ENCODE measurements at regions of chr5 and their contacts with region 1.

Region 1: GRCh38 chr5:66306105-66306843 is 162.2 kb downstream of the SREK1 start:
- DNase-seq: peak; percentile 58
- ATAC-seq: peak; percentile 75
- H3K4me3 ChIP-seq: no peak overlapping the region
- H3K4me3 Mint-ChIP-seq: no peak overlapping the region
- H3K27ac ChIP-seq: no peak overlapping the region
- H3K27ac Mint-ChIP-seq: no peak overlapping the region
- H3K4me1 ChIP-seq: no peaks in the 10 kb centered on the region
- H3K4me1 Mint-ChIP-seq: no peaks in the 10 kb centered on the region
- H3K27me3 ChIP-seq: peaks cover 0 to 15% (median 2%) of the 10 kb centered on the region in 4 experiments
- H3K27me3 Mint-ChIP-seq: peaks cover 20% of the 10 kb centered on the region
- CTCF ChIP-seq: peak; percentile 84

Region 2: DNA sequence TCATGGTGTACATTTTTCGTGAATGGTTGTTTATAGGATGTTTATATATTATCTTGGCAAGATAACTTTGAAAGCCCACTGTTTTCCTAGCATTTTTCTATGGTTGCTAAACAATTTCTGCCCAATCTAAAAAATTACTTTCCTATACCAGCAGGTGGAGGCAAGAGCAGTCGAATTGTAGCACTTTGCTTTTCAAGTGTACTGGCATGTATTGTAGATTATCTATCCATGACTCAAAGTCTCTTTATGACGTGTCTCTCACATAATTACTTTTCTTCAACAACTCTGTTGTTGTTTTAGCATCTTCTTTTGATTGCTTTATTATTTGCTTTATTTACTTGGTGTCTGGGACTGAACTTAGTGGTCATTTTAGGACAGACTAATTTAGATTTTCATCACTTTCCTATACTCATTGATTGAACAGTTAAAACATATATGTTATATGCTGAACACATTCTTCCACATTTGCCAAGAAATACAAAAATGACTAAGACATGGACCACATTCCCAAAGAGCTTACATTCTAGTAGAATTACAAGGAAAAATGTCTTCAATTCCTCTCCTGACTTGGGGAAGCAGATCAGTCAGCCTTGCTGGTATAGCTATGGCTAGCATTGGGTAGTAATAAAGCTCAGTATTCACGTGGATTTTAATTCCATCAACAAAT is 563.6 kb before region 1 on chr5:
- CTCF ChIA-PET with region 1: no interaction called
- POLR2A ChIA-PET with region 1: no interaction called
- intact Hi-C with region 1: loop called (anchors 10 kb)
- DNase-seq: peak; percentile 46
- ATAC-seq: peak; percentile 49
- H3K4me3 ChIP-seq: no peak overlapping the region
- H3K4me3 Mint-ChIP-seq: no peak overlapping the region
- H3K27ac ChIP-seq: no peak overlapping the region
- H3K27ac Mint-ChIP-seq: no peak overlapping the region
- H3K4me1 ChIP-seq: no peaks in the 10 kb centered on the region
- H3K4me1 Mint-ChIP-seq: peaks cover 2% of the 10 kb centered on the region
- H3K27me3 ChIP-seq: no peaks in the 10 kb centered on the region
- H3K27me3 Mint-ChIP-seq: no peaks in the 10 kb centered on the region
- CTCF ChIP-seq: peak; percentile 75

Region 3: DNA sequence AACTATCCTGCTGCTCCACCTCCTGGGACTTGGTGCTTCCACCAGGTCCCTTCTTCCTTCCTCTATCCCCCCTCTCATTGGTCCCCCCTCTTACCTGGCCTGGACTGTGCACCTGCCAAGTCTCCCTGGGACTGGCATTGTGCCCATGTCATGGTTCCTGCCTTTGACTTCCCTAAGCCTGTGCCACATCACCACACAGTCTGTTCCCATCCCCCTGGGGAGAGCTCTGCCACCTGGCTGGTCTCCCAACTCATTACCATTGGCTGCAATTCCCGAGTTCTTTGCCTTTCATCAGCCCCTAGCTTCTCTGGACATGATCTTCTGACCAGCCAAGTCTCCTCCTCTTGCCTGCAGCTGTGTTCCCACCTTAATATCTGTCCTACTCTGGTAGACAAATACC is 18.1 kb after region 1 on chr5:
- CTCF ChIA-PET with region 1: interaction called, 27 read pairs
- POLR2A ChIA-PET with region 1: no interaction called
- intact Hi-C with region 1: no loop called
- DNase-seq: no peak
- ATAC-seq: no peak
- H3K4me3 ChIP-seq: no peak overlapping the region
- H3K4me3 Mint-ChIP-seq: no peak overlapping the region
- H3K27ac ChIP-seq: no peak overlapping the region
- H3K27ac Mint-ChIP-seq: no peak overlapping the region
- H3K4me1 ChIP-seq: no peaks in the 10 kb centered on the region
- H3K4me1 Mint-ChIP-seq: no peaks in the 10 kb centered on the region
- H3K27me3 ChIP-seq: peaks cover 0 to 15% (median 0%) of the 10 kb centered on the region in 4 experiments
- H3K27me3 Mint-ChIP-seq: peaks cover 9% of the 10 kb centered on the region
- CTCF ChIP-seq: no peak

Region 4: GRCh38 chr5:66658516-66658915 is 352.2 kb after region 1 on chr5:
- CTCF ChIA-PET with region 1: interaction called, 13 read pairs
- POLR2A ChIA-PET with region 1: no interaction called
- intact Hi-C with region 1: loop called (anchors 1 kb)
- DNase-seq: no peak
- ATAC-seq: no peak
- H3K4me3 ChIP-seq: no peak overlapping the region
- H3K4me3 Mint-ChIP-seq: no peak overlapping the region
- H3K27ac ChIP-seq: no peak overlapping the region
- H3K27ac Mint-ChIP-seq: no peak overlapping the region
- H3K4me1 ChIP-seq: no peaks in the 10 kb centered on the region
- H3K4me1 Mint-ChIP-seq: no peaks in the 10 kb centered on the region
- H3K27me3 ChIP-seq: no peaks in the 10 kb centered on the region
- H3K27me3 Mint-ChIP-seq: peaks cover 3% of the 10 kb centered on the region
- CTCF ChIP-seq: no peak

Region 5: DNA sequence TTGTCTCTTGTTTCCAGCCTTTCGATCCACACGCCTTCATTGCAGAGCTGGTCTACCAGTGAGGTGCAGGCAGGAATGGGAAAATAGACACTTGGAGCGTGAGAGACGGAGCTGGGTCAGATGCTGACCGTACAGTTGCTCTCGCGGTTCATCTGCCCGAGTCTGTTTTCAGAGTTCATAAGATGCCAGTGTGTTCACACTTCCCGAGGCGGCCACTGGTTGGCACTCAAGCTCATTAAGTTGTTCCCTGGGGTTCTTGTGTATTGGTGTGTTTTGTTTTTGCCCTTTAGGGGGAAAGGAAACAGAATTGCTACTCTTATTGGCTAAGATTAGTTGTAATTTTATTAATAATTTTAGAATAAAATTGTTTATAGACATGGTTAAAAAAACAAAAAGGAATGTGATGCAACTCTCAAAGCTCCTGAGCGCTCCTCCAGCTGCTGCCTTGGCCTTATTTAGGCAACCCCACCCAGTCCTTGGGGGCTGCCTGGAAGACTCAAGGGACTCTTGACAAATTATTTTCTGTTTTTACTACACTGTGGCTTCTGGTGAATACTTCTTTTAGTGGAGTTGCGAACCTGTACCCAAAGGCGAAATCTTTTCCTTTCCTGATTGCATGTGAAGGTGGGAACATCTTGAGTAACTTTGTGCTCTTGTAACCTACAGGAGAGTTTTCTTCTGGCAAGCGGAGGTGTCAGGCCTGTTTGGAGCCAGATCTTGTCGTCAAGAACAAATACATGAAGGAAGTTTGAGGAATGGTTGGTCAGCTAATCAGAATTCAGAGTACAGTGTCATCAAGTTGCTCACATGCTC is 436.0 kb after region 1 on chr5:
- CTCF ChIA-PET with region 1: interaction called, 19 read pairs
- POLR2A ChIA-PET with region 1: no interaction called
- intact Hi-C with region 1: no loop called
- DNase-seq: no peak
- ATAC-seq: no peak
- H3K4me3 ChIP-seq: no peak overlapping the region
- H3K4me3 Mint-ChIP-seq: no peak overlapping the region
- H3K27ac ChIP-seq: no peak overlapping the region
- H3K27ac Mint-ChIP-seq: no peak overlapping the region
- H3K4me1 ChIP-seq: no peaks in the 10 kb centered on the region
- H3K4me1 Mint-ChIP-seq: no peaks in the 10 kb centered on the region
- H3K27me3 ChIP-seq: no peaks in the 10 kb centered on the region
- H3K27me3 Mint-ChIP-seq: peaks cover 5% of the 10 kb centered on the region
- CTCF ChIP-seq: no peak

Region 6: DNA sequence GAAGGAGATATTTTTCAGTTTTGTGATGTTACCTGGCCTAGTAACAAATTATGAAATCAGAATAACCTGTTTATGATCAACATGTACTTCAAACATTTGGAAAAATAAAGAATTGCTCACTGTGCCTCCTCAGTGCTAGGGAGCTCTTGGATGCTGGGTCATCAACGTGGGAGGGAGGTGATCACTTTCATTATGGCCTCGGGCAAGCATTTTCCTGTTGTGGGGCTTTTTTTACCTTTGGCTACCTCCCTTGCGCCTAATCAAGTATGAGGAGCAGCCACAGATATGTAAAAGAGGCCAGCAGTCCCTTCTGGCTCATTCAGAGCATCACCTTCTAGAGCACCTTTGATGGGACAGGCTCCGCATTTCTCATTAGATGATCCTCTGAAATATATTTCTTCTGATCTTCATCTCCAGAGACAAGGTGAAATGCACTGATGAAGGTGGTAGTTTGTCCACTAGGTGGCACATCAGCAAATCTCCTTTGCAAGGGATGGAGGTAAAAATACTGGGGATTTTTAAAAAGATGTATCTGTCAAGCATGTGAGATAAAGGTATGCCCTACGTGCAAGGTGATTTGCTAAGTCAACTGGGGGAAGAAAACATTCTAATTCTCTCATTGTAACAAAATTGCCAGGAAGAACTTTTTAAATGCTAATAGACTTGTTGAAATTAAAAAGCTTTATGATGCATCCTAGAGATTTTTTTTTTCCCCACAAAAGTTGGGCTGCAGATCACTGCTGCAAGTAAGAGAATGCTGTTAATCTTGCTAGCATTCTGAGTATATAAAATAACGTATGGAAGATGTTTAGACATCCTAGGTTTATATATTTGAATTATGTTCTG is 508.1 kb after region 1 on chr5:
- CTCF ChIA-PET with region 1: interaction called, 27 read pairs
- POLR2A ChIA-PET with region 1: no interaction called
- intact Hi-C with region 1: loop called (anchors 1 kb)
- DNase-seq: peak; percentile 46
- ATAC-seq: no peak
- H3K4me3 ChIP-seq: no peak overlapping the region
- H3K4me3 Mint-ChIP-seq: no peak overlapping the region
- H3K27ac ChIP-seq: no peak overlapping the region
- H3K27ac Mint-ChIP-seq: no peak overlapping the region
- H3K4me1 ChIP-seq: peaks cover 0 to 7% of the 10 kb centered on the region in 2 donors
- H3K4me1 Mint-ChIP-seq: peaks cover 23% of the 10 kb centered on the region
- H3K27me3 ChIP-seq: peaks cover 0 to 6% (median 0%) of the 10 kb centered on the region in 4 experiments
- H3K27me3 Mint-ChIP-seq: peaks cover 4% of the 10 kb centered on the region
- CTCF ChIP-seq: peak; percentile 80